ENCODE measurements at regions of chr12 and their contacts with region 1.

Region 1: GRCh38 chr12:49673446-49674317 is 33.5 kb downstream of the FMNL3 start:
- DNase-seq: no peak
- ATAC-seq: peak in 1 of 2 donors; percentile 11
- H3K4me3 Mint-ChIP-seq: peak overlapping the region in 9 of 10 donors; percentile 30 to 76 (median 40)
- H3K27ac Mint-ChIP-seq: peak overlapping the region; percentile 80 to 99 (median 95)
- H3K4me1 Mint-ChIP-seq: peaks cover 50 to 84% (median 82%) of the 10 kb centered on the region in 4 donors
- H3K27me3 Mint-ChIP-seq: no peaks in the 10 kb centered on the region

Region 2: DNA sequence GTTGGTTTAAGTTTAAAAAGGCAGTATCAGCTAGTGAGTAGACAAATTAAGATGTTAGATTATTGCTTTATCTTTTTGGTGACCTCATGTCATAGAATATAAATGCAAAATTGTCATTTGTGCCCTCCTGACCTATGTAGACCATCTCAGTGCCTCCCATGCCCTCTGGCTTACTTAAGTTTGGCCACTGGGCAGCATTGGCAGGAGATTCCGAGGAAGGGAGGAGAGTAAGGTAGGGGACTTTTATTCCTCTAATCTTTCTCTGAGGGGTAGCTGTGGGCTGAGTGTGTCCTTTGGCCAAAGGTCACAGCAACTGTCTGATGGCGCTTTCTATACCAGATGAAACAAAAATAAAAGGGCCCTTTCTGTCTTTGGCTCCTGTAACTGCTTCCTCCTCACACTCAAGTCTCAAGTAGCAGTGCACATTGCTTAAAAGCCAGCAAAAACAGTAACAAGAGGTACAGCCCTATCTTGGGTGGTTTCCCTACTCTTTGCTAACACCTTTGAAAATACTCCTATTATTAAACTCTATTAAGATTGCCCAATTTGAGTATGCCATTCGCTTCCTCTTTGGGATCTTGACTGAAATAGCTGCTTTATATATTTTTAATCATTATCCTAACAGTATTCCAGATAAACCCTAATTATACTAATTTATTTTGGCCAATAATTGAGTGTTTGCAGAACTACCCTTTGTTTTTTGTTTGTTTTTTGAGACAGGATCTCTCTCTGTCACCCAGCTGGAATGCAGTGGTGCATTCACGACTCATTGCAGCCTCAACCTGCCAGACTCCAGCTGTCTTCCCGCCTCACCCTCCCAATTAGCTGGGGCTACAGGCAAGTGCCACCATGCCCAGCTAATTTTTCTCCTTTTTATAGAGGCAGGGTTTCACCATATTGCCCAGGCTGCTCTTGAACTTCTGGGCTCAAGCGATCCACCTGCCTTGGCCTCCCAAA is 191.3 kb before region 1 on chr12:
- POLR2A ChIA-PET with region 1: no interaction called
- DNase-seq: no peak
- ATAC-seq: no peak
- H3K4me3 Mint-ChIP-seq: no peak overlapping the region
- H3K27ac Mint-ChIP-seq: no peak overlapping the region
- H3K4me1 Mint-ChIP-seq: peaks cover 0 to 8% (median 7%) of the 10 kb centered on the region in 4 donors
- H3K27me3 Mint-ChIP-seq: no peaks in the 10 kb centered on the region

Region 3: DNA sequence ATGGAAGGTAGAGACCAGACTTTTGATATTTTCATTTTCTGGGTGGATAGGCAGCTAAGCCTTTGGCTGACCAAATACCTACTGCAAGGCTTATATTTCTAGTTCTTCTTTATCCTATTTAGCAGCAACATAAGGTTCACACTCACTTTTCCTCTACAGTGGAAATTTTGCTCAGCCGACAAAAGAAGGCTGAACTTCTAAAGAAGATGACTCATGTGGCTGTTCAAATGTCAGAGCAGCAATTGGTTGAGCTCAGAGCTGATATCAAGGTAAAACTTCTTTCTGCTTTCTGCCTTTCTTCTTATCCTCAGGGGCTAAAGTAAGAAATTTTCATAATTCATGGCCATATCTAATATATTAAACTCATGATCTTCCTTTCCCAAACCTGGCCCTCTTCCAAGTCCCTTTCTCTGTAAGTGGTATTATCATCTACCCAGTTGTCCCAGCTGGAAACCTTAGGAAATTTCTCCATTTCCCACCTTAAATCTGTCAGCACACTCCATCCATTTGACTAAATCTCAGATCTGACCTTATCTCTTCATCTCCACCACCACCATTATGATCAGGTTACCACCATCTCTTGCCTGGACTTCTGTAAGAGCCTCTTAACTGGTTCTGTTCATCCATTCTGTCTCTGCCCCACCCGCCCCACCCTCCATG is 154.6 kb before region 1 on chr12:
- POLR2A ChIA-PET with region 1: no interaction called
- DNase-seq: no peak
- ATAC-seq: no peak
- H3K4me3 Mint-ChIP-seq: no peak overlapping the region
- H3K27ac Mint-ChIP-seq: peak overlapping the region in 1 of 10 donors; percentile 20
- H3K4me1 Mint-ChIP-seq: peaks cover 0 to 10% (median 0%) of the 10 kb centered on the region in 4 donors
- H3K27me3 Mint-ChIP-seq: no peaks in the 10 kb centered on the region

Region 4: DNA sequence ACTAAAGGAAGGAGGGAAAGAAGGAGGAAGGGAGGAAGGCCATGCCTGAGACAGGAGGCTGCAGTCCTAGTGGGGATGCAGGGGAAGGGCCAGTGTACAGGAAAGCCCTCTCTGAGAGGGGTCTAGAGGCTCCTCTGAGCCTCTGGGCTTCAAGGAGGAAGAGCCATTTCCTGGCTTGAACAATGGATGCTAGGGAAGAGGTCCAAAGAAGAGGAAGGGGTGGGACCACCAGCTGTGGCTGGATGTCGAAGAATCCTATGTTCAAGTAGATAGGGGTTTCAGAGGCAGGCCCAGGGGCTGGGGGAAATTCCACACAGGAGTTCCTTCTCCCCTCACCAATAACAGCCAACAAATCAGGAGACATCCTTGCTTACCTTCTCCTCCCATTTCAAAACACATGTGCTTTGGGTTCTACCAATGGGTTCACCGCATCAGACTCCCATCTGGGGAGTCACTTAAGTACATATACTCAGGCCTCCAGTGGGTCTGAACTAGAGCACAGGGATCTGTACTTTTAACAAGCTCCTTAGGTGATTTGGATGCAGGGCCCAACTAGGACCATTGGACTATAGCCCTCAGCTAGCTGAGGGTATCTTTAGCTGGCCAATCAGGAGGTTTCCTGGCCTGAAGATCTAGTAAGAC is 18.0 kb before region 1 on chr12:
- POLR2A ChIA-PET with region 1: interaction called, 73 read pairs
- DNase-seq: no peak
- ATAC-seq: peak in 1 of 2 donors; percentile 17
- H3K4me3 Mint-ChIP-seq: peak overlapping the region in 8 of 10 donors; percentile 27 to 68 (median 58)
- H3K27ac Mint-ChIP-seq: peak overlapping the region in 9 of 10 donors; percentile 20 to 90 (median 80)
- H3K4me1 Mint-ChIP-seq: peaks cover 25 to 75% (median 41%) of the 10 kb centered on the region in 4 donors
- H3K27me3 Mint-ChIP-seq: no peaks in the 10 kb centered on the region

Region 5: GRCh38 chr12:49662998-49663843 is 10.5 kb before region 1 on chr12:
- POLR2A ChIA-PET with region 1: interaction called, 73 read pairs
- DNase-seq: peak; percentile 50 to 91 (median 72)
- ATAC-seq: peak; percentile 98 to 100
- H3K4me3 Mint-ChIP-seq: peak overlapping the region; percentile 71 to 88 (median 84)
- H3K27ac Mint-ChIP-seq: peak overlapping the region; percentile 92 to 99 (median 98)
- H3K4me1 Mint-ChIP-seq: peaks cover 56 to 88% (median 83%) of the 10 kb centered on the region in 4 donors
- H3K27me3 Mint-ChIP-seq: no peaks in the 10 kb centered on the region